ENCODE measurements at regions of chr19 and their contacts with region 1.

Region 1: DNA sequence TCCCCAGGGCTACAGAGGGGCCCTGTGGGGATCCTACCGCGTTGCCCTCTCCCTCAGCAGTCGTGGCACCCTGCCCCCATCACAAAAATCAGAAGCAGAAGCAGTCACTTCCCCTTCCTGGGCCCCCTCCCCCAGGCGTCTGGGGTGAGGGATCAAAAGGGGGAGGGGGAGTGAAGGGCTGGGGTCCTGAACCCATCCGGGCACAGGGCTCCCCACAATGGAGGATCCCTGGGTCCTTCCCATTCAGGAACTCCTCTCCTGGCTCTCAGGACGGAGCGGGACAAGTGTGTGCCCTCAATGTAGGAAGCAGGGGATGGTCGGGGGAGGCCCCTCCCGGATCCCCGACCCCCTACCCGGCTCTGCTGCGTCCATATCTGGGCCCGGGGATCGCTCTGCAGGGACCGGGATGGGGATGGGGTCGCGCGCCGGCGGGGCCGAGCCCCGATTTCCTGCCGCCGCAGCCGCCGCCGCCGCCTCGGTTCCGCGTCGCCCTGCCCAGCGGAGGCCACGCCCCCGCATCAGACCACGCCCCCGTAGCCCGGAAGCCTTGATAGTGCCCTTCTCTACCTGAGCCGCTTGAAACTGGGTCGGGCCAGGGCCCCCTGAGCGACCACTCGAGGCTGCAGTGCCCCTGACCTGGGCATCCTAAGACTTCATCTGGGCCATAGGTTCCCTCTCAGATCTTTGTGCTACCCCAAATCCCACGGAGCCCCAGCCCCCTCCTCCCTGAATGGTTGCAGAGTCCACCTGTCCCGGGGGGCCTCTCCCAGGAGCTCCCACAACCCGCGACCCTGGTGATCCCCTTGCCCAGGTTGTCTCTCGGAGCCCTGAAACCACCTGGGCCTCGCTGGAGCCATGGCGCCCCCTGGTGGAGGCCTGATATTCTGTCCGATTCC is at the start of gene GMIP:
- DNase-seq: peak; percentile 86 to 89 (median 88)
- H3K4me3 ChIP-seq: peak within 1 kb of the TSS; percentile 96 to 97
- H3K4me3 Mint-ChIP-seq: peak within 1 kb of the TSS; percentile 90 to 99 (median 99)
- H3K27ac ChIP-seq: peak within 1 kb of the TSS; percentile 92
- H3K27ac Mint-ChIP-seq: peak within 1 kb of the TSS; percentile 96 to 99 (median 97)
- H3K4me1 ChIP-seq: peaks cover 22% of the 10 kb centered on the region
- H3K4me1 Mint-ChIP-seq: peaks cover 9 to 25% (median 15%) of the 10 kb centered on the region in 4 donors
- H3K27me3 ChIP-seq: no peaks in the 10 kb centered on the region
- H3K27me3 Mint-ChIP-seq: no peaks in the 10 kb centered on the region
- total RNA-seq, gene GMIP: 101 to 105 TPM

Region 2: GRCh38 chr19:19554074-19555023 is 89.1 kb before region 1 on chr19:
- CTCF ChIA-PET with region 1: interaction called, 23 read pairs
- POLR2A ChIA-PET with region 1: interaction called, 5 read pairs
- intact Hi-C with region 1: no loop called
- DNase-seq: peak; percentile 42 to 50 (median 45)
- H3K4me3 ChIP-seq: no peak overlapping the region
- H3K4me3 Mint-ChIP-seq: peak overlapping the region in 1 of 8 donors; percentile 10
- H3K27ac ChIP-seq: no peak overlapping the region
- H3K27ac Mint-ChIP-seq: peak overlapping the region in 1 of 7 donors; percentile 40
- H3K4me1 ChIP-seq: peaks cover 6% of the 10 kb centered on the region
- H3K4me1 Mint-ChIP-seq: peaks cover 10 to 17% (median 12%) of the 10 kb centered on the region in 4 donors
- H3K27me3 ChIP-seq: no peaks in the 10 kb centered on the region
- H3K27me3 Mint-ChIP-seq: no peaks in the 10 kb centered on the region

Region 3: GRCh38 chr19:19562665-19563347 is 80.6 kb before region 1 on chr19:
- CTCF ChIA-PET with region 1: interaction called, 10 read pairs
- POLR2A ChIA-PET with region 1: interaction called, 5 read pairs
- intact Hi-C with region 1: loop called (anchors 1 kb)
- DNase-seq: peak in 4 of 5 donors; percentile 33 to 45 (median 43)
- H3K4me3 ChIP-seq: no peak overlapping the region
- H3K4me3 Mint-ChIP-seq: no peak overlapping the region
- H3K27ac ChIP-seq: no peak overlapping the region
- H3K27ac Mint-ChIP-seq: peak overlapping the region in 4 of 7 donors; percentile 5 to 74 (median 58)
- H3K4me1 ChIP-seq: peaks cover 16% of the 10 kb centered on the region
- H3K4me1 Mint-ChIP-seq: peaks cover 15 to 30% (median 20%) of the 10 kb centered on the region in 4 donors
- H3K27me3 ChIP-seq: no peaks in the 10 kb centered on the region
- H3K27me3 Mint-ChIP-seq: no peaks in the 10 kb centered on the region

Region 4: DNA sequence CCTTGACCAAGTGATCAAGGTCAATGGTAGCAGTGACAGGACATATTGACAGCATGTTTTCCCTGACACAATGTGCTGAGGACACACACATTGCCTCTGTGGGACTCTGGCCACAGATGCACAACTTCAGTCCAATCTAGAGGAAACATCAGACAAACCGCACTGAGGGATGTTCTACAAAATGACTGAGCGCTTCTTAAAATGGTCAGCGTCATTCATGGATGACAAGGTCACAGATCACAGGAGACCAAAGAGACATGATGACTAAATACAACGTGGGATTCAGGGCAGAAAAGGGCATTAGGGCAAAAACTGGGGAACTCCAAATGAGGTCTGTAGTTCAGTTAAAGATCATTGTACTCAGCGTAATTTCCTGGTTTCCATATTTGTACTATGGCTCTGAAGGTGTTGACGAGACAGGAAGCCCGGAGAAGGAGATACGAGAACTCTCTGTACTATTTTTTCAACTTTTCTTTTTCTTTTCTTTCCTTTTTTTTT is 45.5 kb before region 1 on chr19:
- CTCF ChIA-PET with region 1: no interaction called
- POLR2A ChIA-PET with region 1: interaction called, 6 read pairs
- intact Hi-C with region 1: loop called (anchors 2 kb)
- DNase-seq: peak; percentile 85 to 93 (median 91)
- H3K4me3 ChIP-seq: no peak overlapping the region
- H3K4me3 Mint-ChIP-seq: peak overlapping the region; percentile 47 to 84 (median 79)
- H3K27ac ChIP-seq: peak overlapping the region; percentile 89
- H3K27ac Mint-ChIP-seq: peak overlapping the region; percentile 93 to 100 (median 98)
- H3K4me1 ChIP-seq: peaks cover 83% of the 10 kb centered on the region
- H3K4me1 Mint-ChIP-seq: peaks cover 48 to 84% (median 62%) of the 10 kb centered on the region in 4 donors
- H3K27me3 ChIP-seq: no peaks in the 10 kb centered on the region
- H3K27me3 Mint-ChIP-seq: no peaks in the 10 kb centered on the region

Region 5: GRCh38 chr19:19618219-19619051 is 25.0 kb before region 1 on chr19 and contains the start of gene PBX4:
- CTCF ChIA-PET with region 1: interaction called, 4 read pairs
- POLR2A ChIA-PET with region 1: interaction called, 3 read pairs
- intact Hi-C with region 1: loop called (anchors 2 kb)
- DNase-seq: peak; percentile 99
- H3K4me3 ChIP-seq: peak within 1 kb of the TSS; percentile 71 to 86
- H3K4me3 Mint-ChIP-seq: peak within 1 kb of the TSS; percentile 90 to 98 (median 94)
- H3K27ac ChIP-seq: peak within 1 kb of the TSS; percentile 93
- H3K27ac Mint-ChIP-seq: peak within 1 kb of the TSS; percentile 86 to 99 (median 97)
- H3K4me1 ChIP-seq: peaks cover 53% of the 10 kb centered on the region
- H3K4me1 Mint-ChIP-seq: peaks cover 33 to 49% (median 40%) of the 10 kb centered on the region in 4 donors
- H3K27me3 ChIP-seq: no peaks in the 10 kb centered on the region
- H3K27me3 Mint-ChIP-seq: no peaks in the 10 kb centered on the region
- total RNA-seq, gene PBX4: 46.5 to 56.3 TPM

Region 6: DNA sequence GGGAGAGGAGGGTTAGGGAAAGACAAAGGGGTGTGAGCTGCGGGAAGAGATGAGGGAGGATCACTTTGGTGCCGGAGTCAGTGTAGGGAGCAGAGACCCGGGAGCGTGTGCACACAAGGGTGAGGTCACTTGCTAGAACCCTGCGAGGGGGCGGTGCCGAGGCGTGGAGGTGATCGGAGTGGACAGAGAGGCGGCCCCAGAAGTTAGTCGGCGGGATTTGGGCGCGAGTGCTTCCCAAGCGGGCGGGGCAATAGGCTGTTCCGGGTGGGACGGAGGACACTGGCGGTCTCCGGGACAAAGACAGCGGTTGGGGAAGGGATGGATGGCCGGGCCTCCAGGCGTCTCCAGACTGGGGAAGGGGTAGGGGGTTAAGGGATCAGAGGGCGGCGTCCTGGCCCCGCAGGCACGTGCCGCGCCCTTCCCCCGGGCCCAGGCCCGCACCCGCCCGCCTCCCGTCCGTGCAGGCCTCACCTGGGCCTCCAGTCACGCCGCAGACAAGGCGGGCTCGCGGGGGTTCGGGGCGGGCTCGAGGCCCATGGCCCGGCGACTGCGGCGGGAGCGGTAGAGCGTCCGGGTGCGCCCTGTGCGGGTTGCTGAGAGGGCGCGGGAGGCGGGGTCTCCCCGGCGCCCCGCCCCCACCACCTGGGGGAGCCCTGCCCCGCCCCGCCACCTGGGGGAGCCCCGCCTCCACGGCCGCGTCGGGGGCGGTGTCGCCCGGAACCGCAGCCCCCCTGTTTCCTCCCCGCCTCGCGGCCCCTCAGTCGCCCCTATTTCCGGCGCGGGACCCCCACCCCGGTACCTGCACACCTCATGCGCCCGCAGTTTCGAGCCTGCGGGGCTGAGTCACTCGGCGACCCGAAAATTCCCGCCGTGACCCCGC is 15.5 kb before region 1 on chr19 and contains the start of gene LPAR2:
- CTCF ChIA-PET with region 1: interaction called, 3 read pairs
- POLR2A ChIA-PET with region 1: interaction called, 7 read pairs
- intact Hi-C with region 1: loop called (anchors 1 kb)
- DNase-seq: peak; percentile 80 to 87 (median 84)
- H3K4me3 ChIP-seq: peak within 1 kb of the TSS; percentile 68 to 73
- H3K4me3 Mint-ChIP-seq: peak within 1 kb of the TSS; percentile 92 to 99 (median 93)
- H3K27ac ChIP-seq: peak within 1 kb of the TSS; percentile 80
- H3K27ac Mint-ChIP-seq: peak within 1 kb of the TSS; percentile 92 to 98 (median 95)
- H3K4me1 ChIP-seq: peaks cover 22% of the 10 kb centered on the region
- H3K4me1 Mint-ChIP-seq: peaks cover 14 to 36% (median 28%) of the 10 kb centered on the region in 4 donors
- H3K27me3 ChIP-seq: no peaks in the 10 kb centered on the region
- H3K27me3 Mint-ChIP-seq: no peaks in the 10 kb centered on the region
- total RNA-seq, gene LPAR2: 70.7 to 72.4 TPM